ENCODE measurements at regions of chr2 and their contacts with region 1.

Region 1: GRCh38 chr2:10122386-10123280 is at the start of gene RRM2:
- DNase-seq: no peak
- H3K4me3 ChIP-seq: peak within 1 kb of the TSS; percentile 78
- CTCF ChIP-seq: no peak

Region 2: DNA sequence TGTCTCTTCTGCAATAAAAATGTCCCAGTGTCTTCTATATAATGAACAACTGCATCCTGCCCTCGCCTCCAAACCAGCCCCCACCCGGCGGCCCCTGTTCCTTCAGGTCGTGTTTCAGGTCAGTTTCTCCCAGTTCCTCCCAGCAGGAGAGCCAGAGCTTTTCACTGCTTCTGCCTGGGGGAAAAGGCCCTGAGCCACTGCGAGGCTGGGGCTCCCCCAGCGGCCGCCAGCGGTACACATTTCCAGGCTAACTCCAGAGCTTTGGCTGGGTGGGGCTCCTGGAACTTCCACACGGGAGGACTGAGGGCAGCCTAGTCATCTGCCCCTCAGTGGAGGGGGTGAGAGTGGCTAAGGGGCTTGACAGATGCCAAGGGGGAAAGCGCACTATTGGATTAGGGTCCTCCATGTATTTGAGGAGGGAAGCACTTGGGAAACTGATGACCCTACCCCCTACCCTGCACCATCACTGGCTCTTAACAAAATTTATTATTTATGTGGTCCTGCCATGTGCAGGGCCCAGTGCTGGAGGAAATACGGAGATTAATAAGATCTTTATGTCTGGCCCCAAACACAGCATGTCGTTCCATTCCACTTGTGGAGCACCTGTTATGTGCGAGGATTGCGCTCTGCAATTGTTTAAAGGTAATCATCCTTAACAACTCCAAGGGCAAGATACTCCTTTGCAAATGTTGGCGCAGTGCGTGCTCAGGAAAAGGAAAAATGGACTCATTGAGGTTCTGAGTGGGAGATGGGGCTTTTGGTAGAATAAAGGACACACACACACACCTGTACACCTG is 25.1 kb before region 1 on chr2:
- CTCF ChIA-PET with region 1: interaction called, 18 read pairs
- POLR2A ChIA-PET with region 1: no interaction called
- DNase-seq: no peak
- H3K4me3 ChIP-seq: no peak overlapping the region
- CTCF ChIP-seq: peak; percentile 97

Region 3: GRCh38 chr2:10135296-10136089 is 12.9 kb after region 1 on chr2:
- CTCF ChIA-PET with region 1: interaction called, 41 read pairs
- POLR2A ChIA-PET with region 1: interaction called, 4 read pairs
- DNase-seq: no peak
- H3K4me3 ChIP-seq: no peak overlapping the region
- CTCF ChIP-seq: no peak

Region 4: GRCh38 chr2:10141736-10142642 is 19.4 kb after region 1 on chr2:
- CTCF ChIA-PET with region 1: interaction called, 41 read pairs
- POLR2A ChIA-PET with region 1: interaction called, 4 read pairs
- DNase-seq: no peak
- H3K4me3 ChIP-seq: no peak overlapping the region
- CTCF ChIP-seq: peak; percentile 56

Region 5: DNA sequence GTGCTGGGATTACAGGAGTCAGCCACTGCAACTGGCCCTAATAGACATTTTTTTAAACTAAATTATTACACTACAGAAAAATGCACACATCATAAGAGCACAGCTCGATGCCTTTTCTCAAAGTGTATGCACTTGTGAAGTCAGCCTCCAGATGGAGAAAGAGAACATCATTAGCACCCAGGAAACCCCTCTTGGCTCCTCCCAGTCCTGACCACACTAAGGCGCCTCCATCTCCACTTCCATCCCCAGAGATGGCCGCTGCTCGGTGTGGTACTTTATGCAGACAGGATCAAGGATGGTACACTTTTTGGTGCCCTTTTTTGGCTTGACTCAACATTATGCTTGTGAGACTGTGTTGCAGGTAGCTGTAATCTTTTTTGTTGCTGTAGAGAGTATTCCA is 34.7 kb after region 1 on chr2:
- CTCF ChIA-PET with region 1: interaction called, 15 read pairs
- POLR2A ChIA-PET with region 1: no interaction called
- DNase-seq: no peak
- H3K4me3 ChIP-seq: no peak overlapping the region
- CTCF ChIP-seq: no peak

Region 6: DNA sequence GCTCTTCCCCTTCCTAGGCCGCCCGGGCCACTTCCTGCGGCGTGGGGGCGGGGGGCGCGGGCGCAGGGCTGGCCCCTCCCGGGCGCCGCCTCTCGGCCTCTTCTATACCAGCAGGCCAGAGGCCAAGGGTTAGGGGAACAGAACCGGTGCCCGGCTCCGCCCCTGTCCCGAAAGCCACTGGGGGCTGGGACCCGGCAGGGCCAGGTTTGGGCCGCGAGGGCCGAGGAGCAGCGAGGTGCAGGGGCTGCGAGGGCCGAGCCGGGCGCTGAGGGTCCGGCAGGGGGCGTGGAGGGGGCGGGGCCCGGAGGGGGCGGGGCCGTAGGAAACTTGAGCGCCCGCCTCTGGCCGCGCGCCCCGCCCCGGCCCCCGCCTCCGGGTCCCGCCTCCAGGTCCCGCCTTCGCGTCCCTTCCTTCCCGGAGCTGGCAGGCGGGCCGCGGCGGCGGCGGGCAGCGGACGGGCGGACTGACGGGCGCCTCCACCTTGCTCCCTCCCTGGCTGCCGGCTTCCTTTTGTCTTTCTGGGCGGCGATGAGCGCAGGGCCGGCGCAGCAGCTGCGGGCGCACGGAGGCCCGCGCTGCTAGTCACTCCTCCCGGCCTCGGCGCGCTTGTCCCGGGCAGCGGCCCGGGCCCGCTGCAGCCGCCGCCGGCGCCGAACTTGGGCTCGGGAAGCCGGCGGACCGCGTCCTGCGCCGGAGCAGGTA is 180.0 kb after region 1 on chr2 and contains the start of gene HPCAL1:
- CTCF ChIA-PET with region 1: interaction called, 14 read pairs
- POLR2A ChIA-PET with region 1: no interaction called
- DNase-seq: no peak
- H3K4me3 ChIP-seq: peak within 1 kb of the TSS; percentile 69
- CTCF ChIP-seq: peak; percentile 54

Region 7: DNA sequence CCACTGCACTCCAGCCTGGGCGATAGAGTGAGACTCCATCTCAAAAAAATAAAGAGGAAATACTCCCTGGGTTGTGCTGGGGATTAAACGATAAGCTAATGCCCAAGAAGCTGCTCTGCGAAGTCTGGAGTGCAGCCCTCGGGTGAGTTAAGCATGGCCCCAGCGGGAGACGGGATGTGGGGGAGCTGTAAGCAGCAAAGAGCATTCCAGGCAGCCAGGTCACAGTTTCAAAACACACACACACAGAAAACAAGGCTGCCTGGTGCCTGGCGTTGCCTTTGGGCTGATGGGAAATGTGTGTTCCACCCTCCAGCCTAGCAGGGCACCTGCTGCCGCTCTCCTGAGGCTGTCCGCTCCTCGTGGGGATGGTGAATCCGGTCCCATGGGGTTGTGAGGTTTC is 301.4 kb after region 1 on chr2:
- CTCF ChIA-PET with region 1: interaction called, 17 read pairs
- POLR2A ChIA-PET with region 1: no interaction called
- DNase-seq: peak; percentile 80
- H3K4me3 ChIP-seq: no peak overlapping the region
- CTCF ChIP-seq: no peak